ENCODE measurements at regions of chr20 and their contacts with region 1.

Region 1: GRCh38 chr20:38658879-38659596 is 57.4 kb downstream of the ARHGAP40 start:
- DNase-seq: peak in 1 of 2 experiments; percentile 78
- H3K4me3 ChIP-seq: no peak overlapping the region
- H3K27ac ChIP-seq: no peak overlapping the region
- H3K4me1 ChIP-seq: peaks cover 0 to 7% (median 2%) of the 10 kb centered on the region in 4 experiments; a peak in 3 of 7 replicates
- H3K27me3 ChIP-seq: peaks cover 0 to 2% (median 0%) of the 10 kb centered on the region in 4 experiments; a peak in 4 of 7 replicates
- CTCF ChIP-seq: peak; percentile 79 to 90 (median 88)
- EP300 ChIP-seq: no peak
- POLR2A ChIP-seq: no peak
- RAD21 ChIP-seq: peak; percentile 72 to 82

Region 2: DNA sequence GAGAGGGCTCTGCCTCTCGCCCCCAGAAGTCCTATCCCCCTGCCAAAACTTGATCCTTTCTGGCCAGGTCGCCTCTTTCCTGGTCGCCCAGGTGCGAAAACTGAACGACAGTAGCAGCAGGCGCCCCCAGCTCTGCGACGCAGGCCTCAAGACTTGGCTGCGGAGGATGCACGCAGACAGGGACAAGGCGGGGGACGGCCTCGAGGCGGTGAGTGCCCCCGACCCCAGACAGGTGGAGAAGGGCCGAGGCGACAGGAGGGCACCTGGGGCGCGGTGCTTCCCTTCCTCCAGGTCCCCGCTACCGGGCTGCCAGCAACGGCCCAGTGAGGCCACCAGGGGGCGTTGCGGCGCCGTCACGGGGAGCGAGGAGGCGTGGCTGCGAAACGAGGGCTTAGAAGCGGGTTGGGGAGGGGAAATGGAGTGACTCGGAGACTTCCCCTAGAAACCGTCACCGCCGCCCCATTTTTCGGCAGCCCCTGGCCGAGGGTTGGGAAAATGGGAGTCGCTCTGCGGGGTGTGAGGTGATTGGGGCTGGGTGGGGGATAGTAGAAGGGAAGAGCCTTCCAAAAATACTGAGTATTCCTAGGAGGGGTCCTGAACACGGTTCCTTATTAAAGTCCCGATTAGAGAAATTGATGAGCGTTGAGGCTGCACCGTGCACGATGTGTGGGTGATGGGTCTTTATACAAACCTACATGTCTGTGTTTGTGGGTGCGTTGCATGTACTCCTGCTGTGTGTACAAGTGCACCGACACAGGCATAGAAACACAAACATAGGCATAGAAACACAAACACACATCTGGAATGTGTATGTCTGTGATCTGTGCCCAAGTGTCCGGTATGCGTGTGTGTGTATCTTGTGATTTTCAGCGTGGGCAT is 12.8 kb before region 1 on chr20:
- CTCF ChIA-PET with region 1: interaction called, 73 read pairs
- POLR2A ChIA-PET with region 1: interaction called, 4 read pairs
- DNase-seq: peak; percentile 36 to 98
- H3K4me3 ChIP-seq: peak overlapping the region in 3 of 4 experiments; percentile 30 to 48 (median 44); a peak in 6 of 8 replicates
- H3K27ac ChIP-seq: no peak overlapping the region
- H3K4me1 ChIP-seq: peaks cover 0 to 5% (median 3%) of the 10 kb centered on the region in 4 experiments; a peak in 5 of 7 replicates
- H3K27me3 ChIP-seq: peaks cover 8 to 43% (median 31%) of the 10 kb centered on the region in 4 experiments
- CTCF ChIP-seq: peak; percentile 95 to 97 (median 95)
- EP300 ChIP-seq: no peak
- POLR2A ChIP-seq: no peak
- RAD21 ChIP-seq: peak; percentile 92 to 95

Region 3: GRCh38 chr20:38680500-38681306 is 21.7 kb after region 1 on chr20:
- CTCF ChIA-PET with region 1: interaction called, 32 read pairs
- POLR2A ChIA-PET with region 1: interaction called, 3 read pairs
- DNase-seq: peak in 1 of 2 experiments; percentile 75
- H3K4me3 ChIP-seq: no peak overlapping the region
- H3K27ac ChIP-seq: no peak overlapping the region
- H3K4me1 ChIP-seq: no peaks in the 10 kb centered on the region
- H3K27me3 ChIP-seq: peaks cover 0 to 13% (median 4%) of the 10 kb centered on the region in 4 experiments; a peak in 4 of 7 replicates
- CTCF ChIP-seq: no peak
- EP300 ChIP-seq: no peak
- POLR2A ChIP-seq: no peak
- RAD21 ChIP-seq: no peak

Region 4: GRCh38 chr20:38692436-38693411 is 33.7 kb after region 1 on chr20:
- CTCF ChIA-PET with region 1: interaction called, 37 read pairs
- POLR2A ChIA-PET with region 1: interaction called, 3 read pairs
- DNase-seq: peak in 1 of 2 experiments; percentile 90
- H3K4me3 ChIP-seq: no peak overlapping the region
- H3K27ac ChIP-seq: no peak overlapping the region
- H3K4me1 ChIP-seq: peaks cover 0 to 3% (median 1%) of the 10 kb centered on the region in 4 experiments; a peak in 3 of 7 replicates
- H3K27me3 ChIP-seq: peaks cover 0 to 7% (median 0%) of the 10 kb centered on the region in 4 experiments; a peak in 3 of 7 replicates
- CTCF ChIP-seq: no peak
- EP300 ChIP-seq: no peak
- POLR2A ChIP-seq: no peak
- RAD21 ChIP-seq: 0 out of 4 replicates have a peak, but pooled peaks of 1 of the 2 experiments have one; percentile 9

Region 5: DNA sequence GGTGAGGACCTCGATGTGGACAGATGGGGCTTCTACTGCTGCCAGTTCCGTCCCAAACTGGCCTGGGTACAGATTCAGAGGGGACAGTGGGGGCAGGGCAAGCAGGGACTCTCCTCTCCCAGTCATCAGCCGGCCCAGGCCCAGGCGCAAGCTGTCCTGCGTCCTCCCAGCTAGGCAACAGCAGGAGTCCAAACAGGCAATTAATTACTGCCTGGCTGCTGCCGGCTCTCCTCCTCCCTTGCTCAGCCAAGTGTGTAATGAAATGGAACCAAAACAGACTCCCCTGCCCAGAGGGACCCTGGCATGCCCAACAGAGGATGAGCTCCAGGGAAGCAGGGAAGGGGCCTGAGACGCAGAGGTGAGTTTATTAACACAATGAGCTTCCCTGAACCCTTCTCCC is 47.5 kb after region 1 on chr20:
- CTCF ChIA-PET with region 1: interaction called, 29 read pairs
- POLR2A ChIA-PET with region 1: interaction called, 3 read pairs
- DNase-seq: no peak
- H3K4me3 ChIP-seq: no peak overlapping the region
- H3K27ac ChIP-seq: no peak overlapping the region
- H3K4me1 ChIP-seq: peaks cover 0 to 7% (median 3%) of the 10 kb centered on the region in 4 experiments; a peak in 4 of 7 replicates
- H3K27me3 ChIP-seq: no peaks in the 10 kb centered on the region; a peak in 1 of 7 replicates
- CTCF ChIP-seq: no peak
- EP300 ChIP-seq: no peak
- POLR2A ChIP-seq: no peak
- RAD21 ChIP-seq: no peak

Region 6: DNA sequence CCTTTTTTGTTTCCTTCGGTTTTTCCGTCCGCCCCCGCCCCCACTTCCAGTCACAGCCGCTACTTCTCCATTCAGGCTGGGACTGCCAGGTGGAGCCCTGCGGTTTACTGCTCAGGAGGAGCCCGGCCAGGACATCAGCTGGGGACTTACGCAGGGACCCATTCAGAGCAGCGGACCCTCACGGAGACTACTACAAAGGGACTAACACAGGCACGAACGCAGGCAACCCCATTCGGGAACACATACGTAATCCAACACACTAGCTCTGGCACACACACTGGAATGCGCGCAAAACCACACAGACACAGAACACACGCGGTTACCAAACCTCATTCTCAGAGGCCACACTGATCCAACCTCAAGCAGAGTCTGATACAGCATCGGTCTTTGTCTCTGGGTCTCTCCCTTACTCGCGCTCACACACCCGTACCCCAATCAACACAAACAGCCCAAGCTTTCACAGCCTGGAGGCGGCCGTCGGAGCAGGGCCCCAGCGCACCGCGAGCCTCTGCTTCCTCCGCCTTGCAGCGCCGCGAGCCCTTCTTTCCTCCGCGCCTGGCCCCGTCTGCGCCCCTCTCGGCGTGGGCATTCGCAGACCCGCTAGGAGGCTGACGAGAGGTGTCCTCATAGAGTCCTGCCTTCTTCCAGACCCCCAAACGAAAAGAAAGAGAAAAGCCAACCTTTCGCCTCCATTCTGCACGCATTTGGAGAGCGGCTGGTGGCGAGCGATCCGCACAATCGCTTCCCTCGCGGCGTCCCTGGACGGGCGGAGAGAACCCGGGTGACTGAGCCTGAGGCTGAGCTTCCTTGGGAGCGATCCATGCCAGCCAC is 64.2 kb after region 1 on chr20:
- CTCF ChIA-PET with region 1: interaction called, 88 read pairs
- POLR2A ChIA-PET with region 1: no interaction called
- DNase-seq: peak in 1 of 2 experiments; percentile 72
- H3K4me3 ChIP-seq: peak overlapping the region; percentile 16 to 59 (median 25); a peak in 6 of 8 replicates
- H3K27ac ChIP-seq: no peak overlapping the region
- H3K4me1 ChIP-seq: peaks cover 5 to 49% (median 29%) of the 10 kb centered on the region in 4 experiments
- H3K27me3 ChIP-seq: peaks cover 78 to 96% (median 93%) of the 10 kb centered on the region in 4 experiments
- CTCF ChIP-seq: no peak
- EP300 ChIP-seq: no peak
- POLR2A ChIP-seq: no peak
- RAD21 ChIP-seq: no peak

Measured in H1 (cell line).